HEK293 (cell line): ENCODE measurements at regions of chr2 and their contacts with region 1.

Region 1: DNA sequence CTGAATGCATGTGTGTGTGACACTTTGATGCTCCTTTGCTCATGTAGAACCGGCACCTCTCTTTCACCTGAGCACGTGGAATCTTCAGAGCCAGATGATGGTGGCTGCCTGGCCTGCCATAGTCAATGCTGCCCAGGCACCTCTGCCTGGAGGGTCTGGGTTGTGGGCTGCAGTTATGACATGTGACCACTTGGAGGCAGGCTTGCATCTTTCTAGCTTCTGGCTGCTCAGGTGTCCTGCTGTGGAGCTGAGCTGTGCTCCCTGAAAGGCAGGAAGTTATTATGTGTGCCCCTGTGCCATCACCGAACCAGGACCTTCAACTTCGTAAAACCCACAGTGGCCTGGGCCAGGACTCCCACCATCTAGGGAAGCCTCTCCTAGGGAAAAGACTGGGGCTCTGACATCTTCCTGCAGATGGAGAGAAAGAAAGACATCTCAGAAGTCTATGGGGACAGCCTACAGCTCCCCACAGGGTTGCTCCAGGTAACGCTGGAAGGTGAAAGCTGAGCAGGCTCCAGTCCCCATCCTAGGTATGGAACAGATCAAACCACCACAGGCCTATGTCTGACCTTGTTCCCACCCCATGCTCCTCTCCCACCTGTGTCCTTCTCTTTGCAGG is 30.2 kb downstream of the PSD4 start:
- H3K4me3 ChIP-seq: no peak overlapping the region
- H3K27ac ChIP-seq: no peak overlapping the region
- H3K4me1 ChIP-seq: peaks cover 2% of the 10 kb centered on the region; the same call in 1 of the 2 replicates
- CTCF ChIP-seq: peak; percentile 86

Region 2: DNA sequence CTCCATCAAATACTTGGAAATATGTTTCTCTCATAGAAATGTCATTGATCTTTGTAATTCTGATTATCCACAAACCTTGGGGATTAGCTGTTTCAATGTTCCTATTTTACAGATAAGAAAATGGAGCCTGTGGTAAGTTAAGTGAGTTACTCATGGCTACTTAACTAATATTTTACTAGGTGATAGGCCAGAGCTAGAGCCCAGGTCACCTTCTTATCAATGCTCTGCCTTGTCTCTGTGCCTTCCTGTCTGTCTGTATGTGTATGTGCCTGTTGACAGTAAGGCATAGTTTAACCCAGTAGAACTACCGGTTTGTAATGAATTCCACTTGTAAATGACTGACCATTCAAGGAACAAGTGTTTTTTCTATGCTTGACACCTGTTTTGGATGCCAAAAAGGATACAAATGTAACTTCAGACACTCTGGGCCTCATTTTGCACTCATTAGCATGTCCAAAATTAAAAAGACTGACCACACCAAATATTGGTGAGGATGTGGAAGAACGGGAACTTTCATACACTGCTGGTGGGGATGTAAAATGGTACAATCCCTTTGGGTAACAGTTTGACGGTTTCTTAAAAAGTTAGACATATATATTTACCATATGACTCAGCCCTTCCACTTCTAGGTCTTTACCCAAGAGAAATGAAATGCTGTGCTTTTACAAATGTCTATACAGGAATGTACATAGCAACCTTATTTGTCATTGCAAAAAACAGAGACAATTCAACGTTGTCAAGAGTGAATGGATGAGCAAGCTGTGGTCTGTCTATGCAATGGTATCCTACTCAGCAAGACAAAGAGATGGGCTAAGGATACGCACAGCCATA is 400.1 kb before region 1 on chr2:
- CTCF ChIA-PET with region 1: no interaction called
- POLR2A ChIA-PET with region 1: no interaction called
- H3K4me3 ChIP-seq: no peak overlapping the region
- H3K27ac ChIP-seq: no peak overlapping the region
- H3K4me1 ChIP-seq: no peaks in the 10 kb centered on the region
- CTCF ChIP-seq: no peak

Region 3: GRCh38 chr2:113080134-113080533 is 123.9 kb before region 1 on chr2:
- CTCF ChIA-PET with region 1: interaction called, 27 read pairs
- POLR2A ChIA-PET with region 1: no interaction called
- H3K4me3 ChIP-seq: no peak overlapping the region
- H3K27ac ChIP-seq: no peak overlapping the region
- H3K4me1 ChIP-seq: no peaks in the 10 kb centered on the region
- CTCF ChIP-seq: no peak

Region 4: GRCh38 chr2:113248997-113249770 is 45.2 kb after region 1 on chr2:
- CTCF ChIA-PET with region 1: interaction called, 22 read pairs
- POLR2A ChIA-PET with region 1: no interaction called
- H3K4me3 ChIP-seq: no peak overlapping the region
- H3K27ac ChIP-seq: no peak overlapping the region
- H3K4me1 ChIP-seq: no peaks in the 10 kb centered on the region
- CTCF ChIP-seq: peak; percentile 65

Region 5: DNA sequence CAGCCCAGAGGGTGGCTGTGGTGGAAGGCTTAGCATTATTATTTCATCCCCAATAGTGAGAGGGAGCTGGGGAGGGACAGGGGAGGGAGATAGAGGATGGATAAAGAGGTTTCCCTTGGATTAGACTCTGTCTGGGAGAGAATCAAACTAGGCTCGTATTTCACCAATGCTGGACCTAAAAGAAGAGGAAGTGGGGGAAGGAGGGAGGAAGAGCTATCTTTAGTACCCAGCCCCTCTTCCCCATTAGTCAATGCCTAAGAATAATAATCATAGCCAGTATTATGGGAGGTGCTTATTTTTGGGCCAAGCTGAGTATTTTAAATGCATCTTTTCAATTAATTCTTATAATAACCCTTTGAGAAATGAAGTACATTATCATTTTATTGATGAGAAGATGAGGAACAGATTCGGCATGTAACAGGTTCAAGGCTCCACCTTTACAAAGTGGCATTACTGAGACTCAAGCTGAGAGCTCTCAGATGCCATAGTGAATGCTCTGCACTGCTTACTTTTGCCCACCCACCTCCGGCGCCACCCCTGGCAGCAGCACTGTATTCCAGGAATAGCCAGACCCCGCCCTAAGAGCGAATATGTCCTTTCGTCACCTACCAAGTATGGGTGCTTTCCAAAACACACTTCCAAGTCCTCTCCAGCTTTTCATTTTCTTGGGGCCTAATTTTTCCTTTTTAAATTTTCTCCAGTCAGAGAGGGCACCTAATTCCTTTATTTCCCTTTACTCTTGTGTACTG is 53.7 kb after region 1 on chr2:
- CTCF ChIA-PET with region 1: interaction called, 20 read pairs
- POLR2A ChIA-PET with region 1: no interaction called
- H3K4me3 ChIP-seq: no peak overlapping the region
- H3K27ac ChIP-seq: no peak overlapping the region
- H3K4me1 ChIP-seq: no peaks in the 10 kb centered on the region
- CTCF ChIP-seq: no peak

Region 6: GRCh38 chr2:113305146-113305545 is 101.1 kb after region 1 on chr2:
- CTCF ChIA-PET with region 1: no interaction called
- POLR2A ChIA-PET with region 1: no interaction called
- H3K4me3 ChIP-seq: no peak overlapping the region
- H3K27ac ChIP-seq: no peak overlapping the region
- H3K4me1 ChIP-seq: no peaks in the 10 kb centered on the region
- CTCF ChIP-seq: no peak

Region 7: DNA sequence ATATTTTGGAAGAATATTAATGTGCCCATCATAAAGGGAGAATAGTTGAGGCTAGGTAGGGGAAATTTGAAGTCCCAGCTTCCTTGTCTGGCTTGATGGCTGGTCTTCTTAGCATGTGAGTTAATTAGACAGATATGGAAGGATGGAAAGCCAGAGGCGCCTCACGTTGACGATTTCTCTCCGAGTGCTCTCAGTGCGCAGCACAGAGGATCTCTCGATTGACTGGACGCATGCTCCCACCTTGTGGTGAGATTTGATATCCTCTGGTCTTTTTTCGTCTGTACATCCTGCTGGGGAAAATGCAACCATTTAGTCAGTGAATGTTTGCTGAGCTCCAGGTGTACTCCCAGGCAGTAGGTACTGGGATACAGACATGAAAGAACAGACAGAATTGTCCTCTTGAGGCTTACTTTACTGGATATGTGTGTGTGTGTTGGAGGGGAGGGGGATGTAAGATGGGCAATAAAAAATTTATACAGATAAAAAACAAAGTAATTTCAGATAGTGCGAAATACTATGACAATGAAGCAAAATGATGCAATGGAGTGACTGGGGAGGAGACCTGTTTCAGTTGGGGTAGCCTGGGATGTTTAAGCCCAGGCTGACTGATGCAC is 166.6 kb after region 1 on chr2:
- CTCF ChIA-PET with region 1: interaction called, 72 read pairs
- POLR2A ChIA-PET with region 1: no interaction called
- H3K4me3 ChIP-seq: no peak overlapping the region
- H3K27ac ChIP-seq: no peak overlapping the region
- H3K4me1 ChIP-seq: no peaks in the 10 kb centered on the region
- CTCF ChIP-seq: peak; percentile 75